Panc1 (cell line): ENCODE measurements at regions of chr11 and their contacts with region 1.

Region 1: GRCh38 chr11:86360775-86361395 is 13.8 kb upstream of the CCDC81 start:
- DNase-seq: peak; percentile 18
- ATAC-seq: peak; percentile 95
- H3K4me3 ChIP-seq: no peak overlapping the region
- H3K27ac ChIP-seq: no peak overlapping the region
- H3K4me1 ChIP-seq: no peaks in the 10 kb centered on the region
- H3K27me3 ChIP-seq: no peaks in the 10 kb centered on the region
- CTCF ChIP-seq: peak; percentile 79

Region 2: GRCh38 chr11:86418917-86419316 is 58.0 kb after region 1 on chr11:
- CTCF ChIA-PET with region 1: interaction called, 3 read pairs
- POLR2A ChIA-PET with region 1: no interaction called
- in situ Hi-C with region 1: no loop called
- intact Hi-C with region 1: loop called (anchors 1 kb)
- DNase-seq: no peak
- ATAC-seq: peak; percentile 75
- H3K4me3 ChIP-seq: no peak overlapping the region
- H3K27ac ChIP-seq: no peak overlapping the region
- H3K4me1 ChIP-seq: no peaks in the 10 kb centered on the region
- H3K27me3 ChIP-seq: no peaks in the 10 kb centered on the region
- CTCF ChIP-seq: peak; percentile 41; the same call in 1 of the 2 replicates

Region 3: GRCh38 chr11:86617502-86617901 is 256.6 kb after region 1 on chr11:
- CTCF ChIA-PET with region 1: no interaction called
- POLR2A ChIA-PET with region 1: no interaction called
- in situ Hi-C with region 1: no loop called
- intact Hi-C with region 1: loop called (anchors 10 kb)
- DNase-seq: no peak
- ATAC-seq: no peak
- H3K4me3 ChIP-seq: no peak overlapping the region
- H3K27ac ChIP-seq: no peak overlapping the region
- H3K4me1 ChIP-seq: no peaks in the 10 kb centered on the region
- H3K27me3 ChIP-seq: no peaks in the 10 kb centered on the region
- CTCF ChIP-seq: no peak